ENCODE measurements at regions of chr3 and their contacts with region 1.

Region 1: GRCh38 chr3:186783073-186783730 is at the start of gene EIF4A2:
- DNase-seq: peak; percentile 93 to 96
- ATAC-seq: peak; percentile 95
- H3K4me3 ChIP-seq: peak within 1 kb of the TSS; percentile 80
- H3K27ac ChIP-seq: peak within 1 kb of the TSS; percentile 88 to 93
- H3K4me1 ChIP-seq: peaks cover 0 to 5% of the 10 kb centered on the region in 2 donors
- H3K27me3 ChIP-seq: peaks cover 0 to 1% of the 10 kb centered on the region in 2 donors
- total RNA-seq, gene EIF4A2: 330 to 374 TPM

Region 2: GRCh38 chr3:186570096-186570940 is 212.9 kb before region 1 on chr3 and contains the start of gene DNAJB11:
- intact Hi-C with region 1: loop called in 1 of 2 experiments (anchors 10 kb)
- DNase-seq: peak; percentile 100
- ATAC-seq: peak; percentile 97
- H3K4me3 ChIP-seq: peak within 1 kb of the TSS; percentile 59 to 67
- H3K27ac ChIP-seq: peak within 1 kb of the TSS in 1 of 2 donors; percentile 71
- H3K4me1 ChIP-seq: peaks cover 0 to 3% of the 10 kb centered on the region in 2 donors
- H3K27me3 ChIP-seq: no peaks in the 10 kb centered on the region
- total RNA-seq, gene DNAJB11: 35.0 to 47.0 TPM

Region 3: DNA sequence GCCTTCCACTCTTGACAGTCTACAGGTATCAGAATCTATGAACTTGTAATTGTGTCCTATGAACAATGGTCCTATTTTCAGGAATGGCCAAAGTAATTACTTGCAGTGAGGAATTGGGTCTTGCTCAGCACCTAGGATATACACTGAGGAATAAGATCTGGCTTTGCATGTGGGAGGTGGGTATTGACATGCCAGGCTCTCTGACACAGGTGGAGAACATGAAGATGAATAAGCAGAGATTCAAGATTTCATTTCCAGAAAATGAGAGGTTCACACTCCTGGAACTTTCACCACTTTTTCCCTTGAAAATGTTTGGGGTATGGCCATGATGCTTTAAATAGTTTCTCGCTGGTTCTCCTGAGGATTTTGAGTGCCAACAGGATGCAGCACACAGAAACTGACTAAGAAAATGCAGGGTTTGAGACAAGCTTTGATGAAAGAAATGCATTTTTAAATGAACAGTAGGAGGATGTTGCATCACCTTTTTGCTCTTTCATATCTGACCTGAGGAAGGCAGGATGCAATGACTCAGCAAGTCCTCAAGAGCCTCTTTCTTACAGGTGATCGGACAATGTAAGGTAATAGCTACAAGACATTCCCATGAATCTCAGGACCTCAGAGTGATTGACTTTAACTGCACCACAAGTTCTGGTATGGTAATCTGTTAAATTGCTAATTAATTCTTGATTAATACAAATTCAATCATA is 113.7 kb before region 1 on chr3:
- intact Hi-C with region 1: no loop called
- DNase-seq: no peak
- ATAC-seq: no peak
- H3K4me3 ChIP-seq: no peak overlapping the region
- H3K27ac ChIP-seq: no peak overlapping the region
- H3K4me1 ChIP-seq: no peaks in the 10 kb centered on the region
- H3K27me3 ChIP-seq: peaks cover 0 to 1% of the 10 kb centered on the region in 2 donors

Region 4: DNA sequence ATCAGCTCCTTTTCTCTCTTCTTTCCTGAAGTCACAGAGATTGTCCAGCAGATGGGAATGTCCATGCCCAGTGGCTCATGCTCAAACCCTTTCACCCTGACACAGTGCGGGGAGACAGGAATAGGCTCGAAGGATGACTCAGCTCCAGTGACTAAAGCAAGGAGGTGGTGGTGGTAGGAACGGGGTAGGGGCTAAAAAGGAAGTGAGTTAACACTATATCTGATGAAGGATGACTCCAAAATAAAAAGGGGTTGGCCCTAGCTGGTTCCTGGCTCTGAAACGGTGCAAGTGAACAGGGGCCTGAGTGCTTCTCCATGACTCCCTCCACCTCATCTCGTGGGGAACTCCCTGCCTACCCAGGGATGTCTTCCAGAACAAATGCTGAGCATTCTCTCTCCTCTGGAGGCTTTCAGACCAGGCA is 1203.3 kb after region 1 on chr3:
- intact Hi-C with region 1: no loop called
- DNase-seq: peak in 1 of 2 donors; percentile 49
- ATAC-seq: peak; percentile 46
- H3K4me3 ChIP-seq: no peak overlapping the region
- H3K27ac ChIP-seq: no peak overlapping the region
- H3K4me1 ChIP-seq: no peaks in the 10 kb centered on the region
- H3K27me3 ChIP-seq: no peaks in the 10 kb centered on the region